ENCODE measurements at regions of chr5 and their contacts with region 1.

Region 1: DNA sequence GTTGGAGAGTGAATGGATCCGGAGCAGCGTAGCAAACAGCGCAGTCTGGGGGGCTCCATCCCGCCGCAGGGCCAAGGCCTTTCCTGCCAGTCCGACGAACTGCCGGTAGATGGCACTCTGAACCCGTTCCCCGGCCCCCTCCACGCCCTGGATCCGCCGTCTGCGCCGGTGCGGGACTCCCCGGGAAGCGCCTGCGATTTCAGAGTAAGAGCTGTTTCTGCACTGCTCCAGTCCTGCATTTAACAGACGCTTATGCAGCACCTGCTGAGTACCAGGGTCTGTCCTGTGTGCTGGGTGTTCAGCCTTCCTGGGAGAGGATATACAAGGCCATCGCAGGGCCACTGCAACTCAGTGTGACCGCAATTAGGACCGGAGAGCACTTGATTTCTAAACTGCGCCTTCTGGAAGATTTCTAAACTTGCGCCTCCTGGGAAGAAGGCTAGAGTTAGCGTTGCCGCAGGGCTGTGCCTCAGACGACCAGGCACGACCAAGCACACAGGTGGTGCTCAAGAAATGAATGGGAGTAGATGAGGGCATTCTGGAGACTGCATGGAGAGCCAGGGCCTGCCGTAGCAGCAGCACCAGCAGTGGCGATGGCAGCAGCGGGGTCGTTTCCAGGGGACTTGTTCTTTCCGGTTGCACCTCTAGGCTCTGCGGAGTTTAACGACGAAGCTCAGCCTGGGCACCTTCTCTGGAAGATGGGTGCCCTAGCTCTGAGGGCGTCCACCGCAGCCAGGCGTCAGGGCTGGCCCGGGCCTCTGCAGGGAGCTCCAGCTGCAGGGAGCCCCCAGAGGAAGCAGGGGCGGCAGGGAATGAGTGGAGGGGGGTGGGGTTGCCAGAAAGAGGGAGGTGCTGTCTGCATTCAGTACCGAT is 14.3 kb upstream of the TIFAB start:
- H3K4me3 ChIP-seq: no peak overlapping the region
- H3K27ac ChIP-seq: no peak overlapping the region
- H3K4me1 ChIP-seq: no peaks in the 10 kb centered on the region
- CTCF ChIP-seq: peak; percentile 93

Region 2: GRCh38 chr5:135222171-135222681 is 244.2 kb before region 1 on chr5:
- CTCF ChIA-PET with region 1: no interaction called
- POLR2A ChIA-PET with region 1: no interaction called
- H3K4me3 ChIP-seq: no peak overlapping the region
- H3K27ac ChIP-seq: no peak overlapping the region
- H3K4me1 ChIP-seq: no peaks in the 10 kb centered on the region
- CTCF ChIP-seq: no peak

Region 3: DNA sequence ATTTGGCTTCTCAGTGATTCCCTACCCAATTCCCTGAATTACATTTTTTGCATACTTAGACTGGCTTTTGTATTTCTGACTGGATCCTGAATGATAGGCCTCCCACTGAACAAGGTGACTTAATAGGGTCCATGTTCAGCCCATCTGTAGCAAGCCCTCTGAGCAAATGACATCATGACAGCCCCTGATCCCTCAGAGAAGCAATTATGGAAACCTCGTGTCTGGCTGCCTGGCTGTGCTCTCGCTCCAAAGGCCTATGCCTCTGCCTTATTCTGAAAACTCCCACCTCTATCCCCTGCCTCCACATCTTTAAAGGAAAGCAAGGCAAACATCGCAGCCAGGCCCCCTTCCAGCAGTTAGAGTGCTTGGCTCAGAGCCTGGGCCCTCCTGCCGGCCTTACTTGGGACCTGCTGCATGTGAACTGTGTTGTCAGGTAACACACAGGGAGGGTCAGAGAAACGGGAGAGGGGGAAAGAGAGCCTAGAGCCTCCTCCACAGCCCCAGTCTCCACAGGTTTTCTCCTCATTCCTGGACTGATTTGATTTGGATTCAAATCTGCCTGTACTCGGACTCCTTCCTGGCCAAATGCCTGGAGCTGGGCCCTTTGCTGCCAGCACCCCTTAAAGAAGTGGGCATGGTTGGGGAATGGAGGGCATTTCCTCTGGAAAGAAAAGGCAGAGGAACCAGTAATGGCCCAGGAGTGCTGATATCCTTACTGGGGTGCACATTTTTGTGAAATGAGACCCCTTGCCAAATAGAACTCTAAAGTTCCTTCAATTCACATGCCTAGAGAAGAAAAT is 23.1 kb before region 1 on chr5:
- CTCF ChIA-PET with region 1: interaction called, 15 read pairs
- POLR2A ChIA-PET with region 1: interaction called, 4 read pairs
- H3K4me3 ChIP-seq: no peak overlapping the region
- H3K27ac ChIP-seq: no peak overlapping the region
- H3K4me1 ChIP-seq: no peaks in the 10 kb centered on the region
- CTCF ChIP-seq: no peak

Region 4: GRCh38 chr5:135488727-135489465 is 22.5 kb after region 1 on chr5:
- CTCF ChIA-PET with region 1: interaction called, 26 read pairs
- POLR2A ChIA-PET with region 1: no interaction called
- H3K4me3 ChIP-seq: peak overlapping the region; percentile 6; the same call in 1 of the 2 replicates
- H3K27ac ChIP-seq: peak overlapping the region; percentile 43
- H3K4me1 ChIP-seq: peaks cover 18% of the 10 kb centered on the region
- CTCF ChIP-seq: peak; percentile 49

Region 5: GRCh38 chr5:135535820-135536801 is 69.7 kb after region 1 on chr5 and contains the start of gene NEUROG1:
- CTCF ChIA-PET with region 1: interaction called, 10 read pairs
- POLR2A ChIA-PET with region 1: no interaction called
- H3K4me3 ChIP-seq: peak within 1 kb of the TSS; percentile 34
- H3K27ac ChIP-seq: peak within 1 kb of the TSS; percentile 57; the same call in 1 of the 2 replicates
- H3K4me1 ChIP-seq: no peaks in the 10 kb centered on the region
- CTCF ChIP-seq: no peak

Region 6: DNA sequence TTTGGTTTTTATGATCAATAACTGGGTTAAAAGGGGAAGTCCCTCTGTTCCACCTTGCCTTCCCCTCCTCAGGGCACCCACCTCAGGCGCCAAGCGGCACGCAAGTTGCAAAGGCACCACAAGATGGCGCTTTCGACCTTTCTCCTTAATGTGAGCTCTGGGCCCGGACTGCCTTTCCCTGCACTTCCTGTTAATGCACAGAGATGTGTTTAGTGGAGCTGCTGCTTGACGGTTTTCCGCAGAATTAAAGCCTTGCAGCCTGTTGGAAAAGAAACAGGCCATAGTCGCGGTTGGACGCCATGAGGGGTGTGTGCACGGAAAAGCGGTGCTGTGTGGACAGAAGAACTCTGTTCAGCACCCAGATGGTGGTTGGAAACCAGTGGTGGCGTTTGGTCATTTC is 94.4 kb after region 1 on chr5:
- CTCF ChIA-PET with region 1: interaction called, 853 read pairs
- POLR2A ChIA-PET with region 1: interaction called, 3 read pairs
- H3K4me3 ChIP-seq: no peak overlapping the region
- H3K27ac ChIP-seq: no peak overlapping the region
- H3K4me1 ChIP-seq: no peaks in the 10 kb centered on the region
- CTCF ChIP-seq: peak; percentile 88

Region 7: GRCh38 chr5:135678640-135679268 is 212.3 kb after region 1 on chr5:
- CTCF ChIA-PET with region 1: no interaction called
- POLR2A ChIA-PET with region 1: no interaction called
- H3K4me3 ChIP-seq: no peak overlapping the region
- H3K27ac ChIP-seq: no peak overlapping the region
- H3K4me1 ChIP-seq: no peaks in the 10 kb centered on the region
- CTCF ChIP-seq: no peak

Region 8: DNA sequence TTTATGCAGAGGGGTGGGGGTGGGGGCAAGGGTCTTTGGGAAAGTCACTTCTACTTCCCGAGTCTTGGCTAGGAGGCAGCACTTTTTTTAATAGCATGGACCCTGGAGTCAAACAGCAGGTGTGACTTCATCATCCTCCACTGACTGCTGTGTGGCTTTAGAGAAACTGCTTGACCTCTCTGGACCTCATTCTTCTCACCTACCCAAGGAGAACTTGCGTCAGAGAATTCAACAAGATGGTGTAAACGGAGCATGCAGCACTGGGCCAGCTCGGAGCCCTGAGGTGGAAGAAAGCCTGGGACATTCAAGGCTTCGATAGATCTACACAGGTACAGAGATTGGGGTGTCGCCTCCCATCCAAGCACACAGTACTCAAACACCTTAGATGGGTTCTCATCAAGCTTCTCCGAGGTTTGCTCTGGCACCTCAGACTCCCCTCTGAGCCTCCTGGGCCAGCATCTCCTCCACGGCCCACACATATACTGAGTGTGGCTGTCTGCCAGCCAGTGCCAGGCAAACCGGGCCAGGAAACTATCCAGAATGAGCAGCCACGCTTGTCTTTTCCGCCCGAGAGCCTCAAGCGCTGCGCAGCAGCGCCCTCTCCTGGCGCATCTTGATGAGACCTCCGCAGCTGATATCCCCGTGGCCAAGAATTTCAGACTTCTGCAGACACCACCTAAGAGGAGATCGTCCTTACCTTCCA is 363.4 kb after region 1 on chr5:
- CTCF ChIA-PET with region 1: interaction called, 67 read pairs
- POLR2A ChIA-PET with region 1: no interaction called
- H3K4me3 ChIP-seq: no peak overlapping the region
- H3K27ac ChIP-seq: no peak overlapping the region
- H3K4me1 ChIP-seq: no peaks in the 10 kb centered on the region
- CTCF ChIP-seq: peak; percentile 76

Measured in HEK293 (cell line).